ENCODE measurements at regions of chr15 and their contacts with region 1.

Region 1: DNA sequence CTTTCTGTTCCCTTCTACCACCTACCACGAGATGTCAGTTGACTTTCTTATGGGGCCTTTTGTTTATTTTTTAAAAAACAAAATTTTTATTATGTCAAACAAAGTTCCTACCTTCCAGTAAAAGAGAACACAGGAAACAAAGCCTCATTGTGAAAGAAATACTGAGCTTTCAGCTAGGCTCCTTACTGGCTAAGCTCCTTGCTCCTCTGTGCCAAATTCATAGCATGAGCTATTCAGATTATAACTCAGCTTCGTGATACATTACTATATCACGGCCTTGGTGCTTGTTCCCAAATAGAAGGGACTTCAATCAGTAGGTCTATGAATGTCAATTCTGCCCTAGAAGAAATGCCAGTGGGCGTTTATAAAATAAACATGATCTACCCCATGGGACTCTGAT is 145.8 kb upstream of the CHRM5 start:
- DNase-seq: no peak
- H3K4me3 ChIP-seq: no peak overlapping the region
- H3K27ac ChIP-seq: no peak overlapping the region
- H3K4me1 ChIP-seq: no peaks in the 10 kb centered on the region
- H3K27me3 ChIP-seq: no peaks in the 10 kb centered on the region
- CTCF ChIP-seq: no peak

Region 2: DNA sequence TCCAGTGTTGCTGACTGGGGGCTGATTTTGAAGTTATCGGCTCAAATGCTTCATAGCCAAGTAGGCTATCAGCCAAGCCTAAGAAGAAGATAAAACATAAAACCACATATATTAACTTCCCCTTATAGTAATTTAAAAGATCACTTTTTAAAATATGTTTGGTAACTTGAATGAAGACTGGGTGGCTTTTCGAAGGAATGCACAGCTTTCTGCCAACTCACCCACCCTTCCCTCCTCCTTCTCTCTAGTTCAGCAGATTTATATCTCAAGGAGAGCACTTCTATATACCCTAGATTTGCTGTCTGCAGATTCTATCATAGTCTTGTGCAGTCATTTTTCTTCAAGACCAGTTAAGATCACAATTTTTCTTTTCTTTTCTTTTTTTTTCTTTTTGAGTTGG is 43.6 kb before region 1 on chr15:
- CTCF ChIA-PET with region 1: no interaction called
- dilution Hi-C with region 1: loop called (anchors 5 kb)
- in situ Hi-C with region 1: no loop called
- intact Hi-C with region 1: no loop called
- DNase-seq: no peak
- H3K4me3 ChIP-seq: no peak overlapping the region
- H3K27ac ChIP-seq: no peak overlapping the region
- H3K4me1 ChIP-seq: no peaks in the 10 kb centered on the region
- H3K27me3 ChIP-seq: no peaks in the 10 kb centered on the region
- CTCF ChIP-seq: no peak

Region 3: GRCh38 chr15:33888176-33888575 is 65.7 kb after region 1 on chr15:
- CTCF ChIA-PET with region 1: no interaction called
- dilution Hi-C with region 1: loop called (anchors 10 kb)
- in situ Hi-C with region 1: no loop called
- intact Hi-C with region 1: no loop called
- DNase-seq: no peak
- H3K4me3 ChIP-seq: no peak overlapping the region
- H3K27ac ChIP-seq: no peak overlapping the region
- H3K4me1 ChIP-seq: no peaks in the 10 kb centered on the region
- H3K27me3 ChIP-seq: no peaks in the 10 kb centered on the region
- CTCF ChIP-seq: no peak

Region 4: GRCh38 chr15:34855397-34855796 is 1032.9 kb after region 1 on chr15:
- CTCF ChIA-PET with region 1: no interaction called
- dilution Hi-C with region 1: no loop called
- in situ Hi-C with region 1: no loop called
- intact Hi-C with region 1: no loop called
- DNase-seq: peak; percentile 56
- H3K4me3 ChIP-seq: no peak overlapping the region
- H3K27ac ChIP-seq: no peak overlapping the region
- H3K4me1 ChIP-seq: peaks cover 12% of the 10 kb centered on the region
- H3K27me3 ChIP-seq: no peaks in the 10 kb centered on the region
- CTCF ChIP-seq: no peak